ENCODE measurements at regions of chr2 and their contacts with region 1.

Region 1: GRCh38 chr2:8681786-8682692 is at the start of gene ID2:
- DNase-seq: peak; percentile 100
- H3K4me3 ChIP-seq: peak within 1 kb of the TSS; percentile 81
- H3K27ac ChIP-seq: peak within 1 kb of the TSS; percentile 100
- H3K4me1 ChIP-seq: peaks cover 77% of the 10 kb centered on the region
- H3K27me3 ChIP-seq: no peaks in the 10 kb centered on the region
- CTCF ChIP-seq: no peak
- total RNA-seq, gene ID2: 32.2 TPM

Region 2: GRCh38 chr2:7097348-7097895 is 1584.6 kb before region 1 on chr2:
- intact Hi-C with region 1: loop called (anchors 5 kb)
- DNase-seq: peak; percentile 73
- H3K4me3 ChIP-seq: peak overlapping the region; percentile 34
- H3K27ac ChIP-seq: no peak overlapping the region
- H3K4me1 ChIP-seq: peaks cover 4% of the 10 kb centered on the region
- H3K27me3 ChIP-seq: no peaks in the 10 kb centered on the region
- CTCF ChIP-seq: peak; percentile 99

Region 3: GRCh38 chr2:7203055-7203467 is 1479.0 kb before region 1 on chr2:
- intact Hi-C with region 1: loop called (anchors 5 kb)
- DNase-seq: no peak
- H3K4me3 ChIP-seq: no peak overlapping the region
- H3K27ac ChIP-seq: no peak overlapping the region
- H3K4me1 ChIP-seq: no peaks in the 10 kb centered on the region
- H3K27me3 ChIP-seq: no peaks in the 10 kb centered on the region
- CTCF ChIP-seq: peak; percentile 87

Region 4: DNA sequence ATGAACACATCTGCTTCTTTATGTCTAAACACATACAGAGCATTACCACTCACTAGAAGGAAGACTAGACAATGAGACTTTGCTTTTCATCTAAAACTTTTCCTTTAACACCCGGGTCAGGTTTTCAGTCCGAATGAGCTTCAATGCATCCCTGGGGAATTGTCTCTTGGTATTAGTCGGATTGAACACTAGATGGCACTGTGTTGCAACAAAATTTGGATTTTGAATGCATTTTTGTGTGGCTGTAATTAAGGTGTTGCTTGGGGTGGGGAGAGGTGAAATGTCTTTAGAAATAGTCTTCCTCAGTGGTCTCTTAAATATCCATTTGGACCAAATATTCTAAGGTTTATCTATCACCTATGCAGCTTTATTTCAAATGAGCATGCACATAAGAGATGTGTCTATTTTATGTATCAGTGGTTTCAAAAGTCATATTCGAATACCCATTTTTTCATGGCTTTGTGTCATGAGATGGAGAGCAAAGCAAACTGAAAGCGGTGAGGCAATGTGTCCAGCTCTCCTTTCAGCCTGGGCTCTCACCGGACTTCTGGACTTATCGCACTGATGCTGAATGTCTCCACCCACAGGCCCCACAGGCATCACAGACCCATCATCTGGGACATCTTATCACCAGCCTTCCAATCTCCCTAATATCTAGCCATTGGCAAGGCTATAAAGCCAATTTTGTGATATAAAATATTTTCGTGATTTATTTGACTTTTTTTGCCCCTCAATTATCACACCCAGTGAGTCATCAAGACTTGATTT is 1254.6 kb before region 1 on chr2:
- intact Hi-C with region 1: loop called (anchors 5 kb)
- DNase-seq: no peak
- H3K4me3 ChIP-seq: no peak overlapping the region
- H3K27ac ChIP-seq: no peak overlapping the region
- H3K4me1 ChIP-seq: peaks cover 11% of the 10 kb centered on the region
- H3K27me3 ChIP-seq: peaks cover 90% of the 10 kb centered on the region
- CTCF ChIP-seq: peak; percentile 81

Region 5: GRCh38 chr2:8215159-8215863 is 466.7 kb before region 1 on chr2:
- intact Hi-C with region 1: loop called (anchors 10 kb)
- DNase-seq: no peak
- H3K4me3 ChIP-seq: no peak overlapping the region
- H3K27ac ChIP-seq: peak overlapping the region; percentile 20
- H3K4me1 ChIP-seq: peaks cover 15% of the 10 kb centered on the region
- H3K27me3 ChIP-seq: no peaks in the 10 kb centered on the region
- CTCF ChIP-seq: no peak